ENCODE measurements at regions of chr7 and their contacts with region 1.

Region 1: GRCh38 chr7:104983578-104984539 is 30.1 kb upstream of the KMT2E start:
- DNase-seq: peak; percentile 73 to 91 (median 87)
- H3K4me3 ChIP-seq: peak overlapping the region; percentile 56 to 90 (median 75)
- H3K27ac ChIP-seq: peak overlapping the region; percentile 81 to 100 (median 98)
- H3K27me3 ChIP-seq: no peaks in the 10 kb centered on the region
- CTCF ChIP-seq: peak in 55 of 56 donors; percentile 32 to 75 (median 56)

Region 2: DNA sequence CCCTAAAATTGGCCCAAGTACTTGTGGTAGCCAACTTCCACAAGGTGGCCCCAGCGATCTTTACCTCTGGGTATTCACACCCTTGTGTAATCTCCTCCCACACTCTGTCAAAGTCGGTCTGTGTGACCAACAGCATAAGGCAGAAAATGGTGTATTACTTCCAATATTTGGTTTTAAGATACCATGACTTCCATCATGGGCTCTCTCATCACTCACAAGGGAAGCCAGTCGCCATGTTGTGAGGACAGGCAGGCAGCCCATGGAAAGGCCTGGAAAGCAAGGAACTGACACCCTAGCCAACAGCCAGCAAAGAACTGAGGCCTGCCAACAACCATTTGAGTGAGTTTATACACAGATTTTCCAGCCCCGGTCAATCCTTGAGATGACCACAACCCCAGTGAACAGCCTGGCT is 60.8 kb before region 1 on chr7:
- intact Hi-C with region 1: loop called (anchors 5 to 10 kb)
- DNase-seq: peak in 9 of 10 donors; percentile 7 to 72 (median 50)
- H3K4me3 ChIP-seq: no peak overlapping the region
- H3K27ac ChIP-seq: peak overlapping the region in 46 of 59 donors; percentile 2 to 77 (median 56)
- H3K27me3 ChIP-seq: no peaks in the 10 kb centered on the region
- CTCF ChIP-seq: peak; percentile 30 to 84 (median 67)

Region 3: DNA sequence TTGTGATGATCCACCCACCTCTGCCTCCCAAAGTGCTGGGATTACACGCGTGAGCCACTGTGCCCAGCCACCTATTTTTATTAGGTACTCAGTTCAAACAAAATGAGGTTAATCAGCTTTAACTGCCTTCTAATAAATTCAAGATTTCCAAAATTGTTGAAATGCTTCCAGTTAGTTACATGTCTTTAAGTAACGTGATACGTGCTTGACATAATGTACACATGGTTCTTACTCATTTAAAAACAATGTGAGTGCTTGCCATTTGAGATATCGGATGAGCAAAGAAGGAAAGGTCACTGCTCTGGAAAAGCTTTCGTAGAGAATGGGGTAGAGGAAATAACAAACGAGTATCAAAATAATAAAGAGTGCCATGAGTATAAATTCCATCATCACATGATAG is 113.8 kb after region 1 on chr7:
- intact Hi-C with region 1: loop called in 1 of 2 experiments (anchors 10 kb)
- DNase-seq: no peak
- H3K4me3 ChIP-seq: no peak overlapping the region
- H3K27ac ChIP-seq: peak overlapping the region in 5 of 59 donors; percentile 6 to 21 (median 14)
- H3K27me3 ChIP-seq: no peaks in the 10 kb centered on the region
- CTCF ChIP-seq: no peak

Region 4: GRCh38 chr7:105346593-105347322 is 362.9 kb after region 1 on chr7:
- intact Hi-C with region 1: loop called in 1 of 2 experiments (anchors 10 kb)
- DNase-seq: no peak
- H3K4me3 ChIP-seq: no peak overlapping the region
- H3K27ac ChIP-seq: no peak overlapping the region
- H3K27me3 ChIP-seq: no peaks in the 10 kb centered on the region
- CTCF ChIP-seq: no peak

Region 5: GRCh38 chr7:105589356-105590077 is 605.7 kb after region 1 on chr7:
- intact Hi-C with region 1: loop called in 1 of 2 experiments (anchors 10 kb)
- DNase-seq: peak; percentile 29 to 87 (median 78)
- H3K4me3 ChIP-seq: no peak overlapping the region
- H3K27ac ChIP-seq: peak overlapping the region in 20 of 59 donors; percentile 1 to 64 (median 38)
- H3K27me3 ChIP-seq: no peaks in the 10 kb centered on the region
- CTCF ChIP-seq: peak; percentile 31 to 86 (median 74)

Measured in dorsolateral prefrontal cortex (tissue), 120 donors.